GM10248 (cell line): ENCODE measurements at regions of chr12 and their contacts with region 1.

Region 1: GRCh38 chr12:22529281-22530060 is 14.9 kb downstream of the C2CD5 start:
- DNase-seq: peak; percentile 21
- CTCF ChIP-seq: peak; percentile 19

Region 2: DNA sequence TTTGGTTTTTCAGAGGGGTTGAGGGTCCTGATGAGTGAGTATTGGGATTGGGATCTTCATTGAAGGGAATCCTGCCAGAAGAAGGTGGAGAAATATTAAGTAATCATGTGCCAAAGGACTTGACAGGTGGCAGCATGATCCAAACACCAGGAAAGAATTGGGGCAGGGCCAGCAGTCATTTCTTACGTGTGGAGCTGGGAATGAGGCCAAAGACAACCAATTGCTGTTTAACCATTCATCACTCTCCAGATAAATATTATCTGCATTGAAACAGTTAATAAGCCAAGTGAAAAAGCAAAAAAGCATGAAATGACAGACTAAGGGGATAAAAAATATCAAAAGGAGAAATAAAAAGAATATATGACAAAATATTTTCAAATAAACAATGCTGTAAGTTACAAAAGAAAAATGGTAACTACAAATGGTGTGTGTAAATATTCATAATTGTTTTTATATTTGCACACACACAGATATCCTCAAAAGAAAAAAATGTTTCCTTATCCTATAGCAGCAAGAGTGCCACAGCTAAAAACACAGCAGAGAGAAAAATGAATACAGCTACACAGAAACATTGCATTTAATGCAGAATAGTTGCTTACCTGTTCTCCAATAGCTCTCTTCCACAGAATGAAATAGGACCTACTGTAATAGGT is 11.3 kb before region 1 on chr12:
- CTCF ChIA-PET with region 1: interaction called, 10 read pairs
- POLR2A ChIA-PET with region 1: no interaction called
- DNase-seq: no peak
- CTCF ChIP-seq: no peak

Region 3: DNA sequence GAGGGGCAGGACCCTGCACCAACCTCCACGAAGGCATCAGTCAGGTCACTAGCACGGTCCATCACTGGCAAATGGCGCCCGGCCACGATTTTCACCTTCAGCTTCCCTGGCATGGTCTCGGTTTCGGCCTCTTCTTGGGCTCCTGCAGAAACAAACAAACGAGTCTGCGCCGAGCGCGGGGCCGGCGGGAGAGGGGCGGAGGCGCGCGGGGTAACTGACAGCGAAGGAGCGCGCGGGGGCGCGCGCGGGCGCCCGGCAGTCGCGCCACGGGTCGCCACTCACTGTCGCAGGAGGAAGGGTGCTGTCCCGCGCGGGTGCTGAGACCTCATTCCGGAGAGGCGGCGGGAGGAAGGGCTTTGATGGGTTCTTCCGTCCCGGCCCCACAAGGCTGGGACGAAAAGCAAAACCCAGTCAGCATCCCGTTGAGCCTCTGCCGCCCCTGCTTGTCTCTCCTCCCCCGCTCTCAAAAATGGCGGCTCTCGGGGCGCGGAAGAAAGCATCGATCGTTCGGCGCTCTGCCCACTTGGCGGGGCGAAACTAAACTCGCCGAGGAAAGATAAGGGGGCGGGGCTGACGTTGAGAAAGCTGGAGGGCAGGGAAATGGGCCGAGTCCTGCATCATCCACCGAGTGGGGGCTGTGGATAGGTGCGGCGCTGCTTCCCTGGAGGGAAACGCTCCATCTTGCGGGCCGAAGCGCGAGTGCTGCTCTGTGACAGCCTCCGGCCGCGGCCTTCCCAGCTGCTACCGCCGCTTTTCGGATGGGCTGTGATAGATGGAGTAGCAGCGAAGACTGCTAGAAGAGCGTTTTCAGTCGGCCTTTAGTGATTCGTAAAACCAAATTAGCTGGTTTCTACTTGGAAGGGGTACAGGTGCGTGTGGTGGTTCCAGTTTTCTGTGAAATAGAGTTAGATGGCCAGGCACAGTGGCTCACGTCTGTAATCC is 14.8 kb after region 1 on chr12 and contains the start of gene C2CD5:
- CTCF ChIA-PET with region 1: interaction called, 15 read pairs
- POLR2A ChIA-PET with region 1: no interaction called
- DNase-seq: peak; percentile 91
- CTCF ChIP-seq: peak; percentile 51